ENCODE measurements at regions of chr5 and their contacts with region 1.

Region 1: GRCh38 chr5:154566146-154566680 is 88.2 kb upstream of the HAND1 start:
- DNase-seq: no peak
- H3K4me3 Mint-ChIP-seq: no peak overlapping the region
- H3K27ac Mint-ChIP-seq: no peak overlapping the region
- H3K4me1 Mint-ChIP-seq: no peaks in the 10 kb centered on the region
- H3K27me3 Mint-ChIP-seq: peaks cover 48% of the 10 kb centered on the region
- CTCF ChIP-seq: no peak

Region 2: GRCh38 chr5:154384480-154385235 is 181.6 kb before region 1 on chr5:
- CTCF ChIA-PET with region 1: no interaction called
- intact Hi-C with region 1: no loop called
- DNase-seq: no peak
- H3K4me3 Mint-ChIP-seq: no peak overlapping the region
- H3K27ac Mint-ChIP-seq: peak overlapping the region; percentile 59
- H3K4me1 Mint-ChIP-seq: peaks cover 44% of the 10 kb centered on the region
- H3K27me3 Mint-ChIP-seq: no peaks in the 10 kb centered on the region
- CTCF ChIP-seq: no peak

Region 3: DNA sequence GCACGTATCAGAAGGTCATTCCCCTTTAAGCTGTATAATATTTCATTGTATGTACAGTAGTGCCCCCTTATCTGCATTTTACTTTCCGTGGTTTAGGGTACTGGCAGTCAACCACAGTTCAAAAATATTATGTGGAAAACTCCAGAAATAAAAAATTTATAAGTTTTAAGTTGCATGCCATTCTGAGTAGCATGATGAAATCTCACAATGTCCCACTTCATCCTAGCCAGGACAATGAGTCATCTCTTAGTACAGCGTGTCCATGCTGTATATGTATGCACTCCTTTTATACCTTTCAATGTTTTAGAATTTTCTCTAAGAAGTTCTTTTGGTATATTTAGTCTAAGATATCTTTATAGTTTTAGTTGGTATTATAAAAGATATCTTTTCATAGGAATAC is 26.9 kb after region 1 on chr5:
- CTCF ChIA-PET with region 1: interaction called, 13 read pairs
- intact Hi-C with region 1: no loop called
- DNase-seq: no peak
- H3K4me3 Mint-ChIP-seq: no peak overlapping the region
- H3K27ac Mint-ChIP-seq: no peak overlapping the region
- H3K4me1 Mint-ChIP-seq: no peaks in the 10 kb centered on the region
- H3K27me3 Mint-ChIP-seq: peaks cover 55% of the 10 kb centered on the region
- CTCF ChIP-seq: no peak